ENCODE measurements at regions of chr6 and their contacts with region 1.

Region 1: GRCh38 chr6:83067448-83068413 is at the start of gene DOP1A:
- DNase-seq: peak; percentile 91
- H3K4me3 ChIP-seq: peak within 1 kb of the TSS; percentile 92 to 96 (median 94)
- H3K27ac ChIP-seq: peak within 1 kb of the TSS; percentile 65
- H3K4me1 ChIP-seq: peaks cover 34% of the 10 kb centered on the region
- H3K27me3 ChIP-seq: no peaks in the 10 kb centered on the region
- CTCF ChIP-seq: peak; percentile 91 to 98
- total RNA-seq, gene DOP1A: 24.3 to 74.3 TPM

Region 2: DNA sequence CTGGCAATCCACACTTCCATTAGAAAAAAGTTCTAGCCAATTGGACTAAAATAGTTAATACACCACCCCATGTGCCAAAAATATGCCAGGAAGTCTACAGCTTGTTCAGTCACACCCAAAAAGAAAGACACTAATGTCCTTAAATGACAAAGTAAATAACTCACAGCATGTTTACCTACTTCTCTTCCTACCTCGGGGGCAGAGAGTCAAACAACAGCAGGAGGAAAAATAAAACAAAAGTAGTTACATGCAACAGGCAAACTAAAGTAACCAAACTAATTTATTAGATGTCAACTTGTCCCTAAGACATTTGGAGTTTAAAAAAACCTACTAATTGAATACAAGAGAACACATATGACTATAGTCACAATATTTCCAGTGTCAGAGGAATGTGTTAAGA is 59.1 kb before region 1 on chr6:
- CTCF ChIA-PET with region 1: no interaction called
- dilution Hi-C with region 1: no loop called
- in situ Hi-C with region 1: no loop called
- intact Hi-C with region 1: no loop called
- DNase-seq: no peak
- H3K4me3 ChIP-seq: no peak overlapping the region
- H3K27ac ChIP-seq: no peak overlapping the region
- H3K4me1 ChIP-seq: no peaks in the 10 kb centered on the region
- H3K27me3 ChIP-seq: no peaks in the 10 kb centered on the region
- CTCF ChIP-seq: no peak

Region 3: DNA sequence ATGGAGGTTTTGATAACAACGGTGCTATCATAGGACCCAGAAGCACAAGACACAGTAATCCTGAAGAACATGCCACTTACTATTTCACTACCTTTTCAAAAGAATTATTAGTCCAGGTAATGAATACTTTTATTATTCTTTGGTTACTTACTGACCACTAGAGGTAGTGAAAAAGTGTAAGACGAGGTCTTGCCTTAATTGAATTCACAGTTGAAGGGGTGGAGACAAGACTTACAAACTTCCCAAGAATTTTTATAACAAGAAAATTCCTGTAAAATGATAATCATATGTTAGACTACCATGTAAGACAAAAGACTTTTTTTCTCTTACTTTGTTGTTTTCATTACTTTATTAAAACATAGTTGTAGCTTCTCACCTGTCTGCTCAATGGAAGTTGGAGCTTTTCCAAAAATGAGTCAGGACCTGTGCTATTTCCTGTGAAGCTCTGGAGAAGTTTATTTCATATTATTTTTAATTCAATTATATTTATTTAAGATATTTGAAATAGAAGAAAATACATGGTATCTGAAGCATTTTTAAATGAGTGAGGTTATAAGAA is 52.1 kb after region 1 on chr6:
- CTCF ChIA-PET with region 1: interaction called, 7 read pairs
- dilution Hi-C with region 1: no loop called
- in situ Hi-C with region 1: no loop called
- intact Hi-C with region 1: loop called (anchors 1 kb)
- DNase-seq: peak; percentile 71
- H3K4me3 ChIP-seq: no peak overlapping the region
- H3K27ac ChIP-seq: no peak overlapping the region
- H3K4me1 ChIP-seq: peaks cover 12% of the 10 kb centered on the region
- H3K27me3 ChIP-seq: no peaks in the 10 kb centered on the region
- CTCF ChIP-seq: no peak

Region 4: GRCh38 chr6:83192871-83193746 is 125.4 kb after region 1 on chr6 and contains the starts of genes PGM3 and RWDD2A:
- CTCF ChIA-PET with region 1: interaction called, 3 read pairs
- dilution Hi-C with region 1: no loop called
- in situ Hi-C with region 1: no loop called
- intact Hi-C with region 1: loop called (anchors 5 kb)
- DNase-seq: peak; percentile 77
- H3K4me3 ChIP-seq: peak within 1 kb of the TSS; percentile 77 to 89 (median 86)
- H3K27ac ChIP-seq: peak within 1 kb of the TSS; percentile 56
- H3K4me1 ChIP-seq: peaks cover 13% of the 10 kb centered on the region
- H3K27me3 ChIP-seq: no peaks in the 10 kb centered on the region
- CTCF ChIP-seq: no peak
- total RNA-seq, gene PGM3: 32.2 to 63.6 TPM
- total RNA-seq, gene RWDD2A: 1.3 to 2.6 TPM

Region 5: DNA sequence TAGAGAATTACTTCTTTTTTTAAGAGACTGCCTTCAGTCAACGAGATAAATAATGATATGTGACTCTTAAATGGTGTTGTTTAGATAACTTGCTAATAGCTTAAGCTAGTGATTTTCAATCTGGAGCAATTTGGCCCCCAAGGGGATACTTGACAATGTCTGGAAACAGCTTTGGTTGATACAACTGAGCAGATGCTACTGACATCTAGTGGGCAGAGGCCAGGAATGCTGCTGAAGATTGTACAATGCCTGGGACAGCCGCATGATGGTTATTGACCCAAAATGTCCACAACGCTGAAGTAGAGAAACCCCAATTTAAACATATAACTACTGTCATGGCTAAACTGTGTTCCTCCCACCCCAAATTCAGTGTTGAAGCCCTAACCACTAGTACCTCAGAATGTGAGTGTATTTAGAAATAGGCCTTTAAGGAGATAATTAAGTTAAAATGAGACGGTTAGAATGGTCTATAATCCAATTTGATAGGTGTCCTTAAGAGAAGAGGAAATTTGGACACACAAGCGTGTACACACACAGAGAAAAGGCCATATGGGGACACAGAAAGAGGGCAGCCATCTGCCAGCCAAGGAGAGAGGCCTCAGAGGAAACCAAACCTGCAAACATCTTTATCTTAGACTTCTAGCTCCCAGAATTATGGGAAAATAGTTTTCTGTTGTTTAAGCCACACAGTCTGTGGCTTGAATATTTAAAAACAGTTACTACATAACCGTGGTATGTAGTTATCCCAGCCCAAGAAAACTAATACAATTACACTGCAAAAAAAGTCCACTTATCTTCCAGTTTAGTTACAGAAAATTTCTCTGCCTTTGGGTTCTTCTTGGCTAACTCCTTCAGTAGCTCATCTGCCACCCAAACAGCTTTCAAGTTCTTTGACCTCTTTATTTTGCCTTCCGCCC is 147.7 kb after region 1 on chr6:
- CTCF ChIA-PET with region 1: interaction called, 30 read pairs
- dilution Hi-C with region 1: no loop called
- in situ Hi-C with region 1: no loop called
- intact Hi-C with region 1: loop called (anchors 1 kb)
- DNase-seq: peak; percentile 51
- H3K4me3 ChIP-seq: no peak overlapping the region
- H3K27ac ChIP-seq: no peak overlapping the region
- H3K4me1 ChIP-seq: no peaks in the 10 kb centered on the region
- H3K27me3 ChIP-seq: no peaks in the 10 kb centered on the region
- CTCF ChIP-seq: peak; percentile 80 to 91

Region 6: DNA sequence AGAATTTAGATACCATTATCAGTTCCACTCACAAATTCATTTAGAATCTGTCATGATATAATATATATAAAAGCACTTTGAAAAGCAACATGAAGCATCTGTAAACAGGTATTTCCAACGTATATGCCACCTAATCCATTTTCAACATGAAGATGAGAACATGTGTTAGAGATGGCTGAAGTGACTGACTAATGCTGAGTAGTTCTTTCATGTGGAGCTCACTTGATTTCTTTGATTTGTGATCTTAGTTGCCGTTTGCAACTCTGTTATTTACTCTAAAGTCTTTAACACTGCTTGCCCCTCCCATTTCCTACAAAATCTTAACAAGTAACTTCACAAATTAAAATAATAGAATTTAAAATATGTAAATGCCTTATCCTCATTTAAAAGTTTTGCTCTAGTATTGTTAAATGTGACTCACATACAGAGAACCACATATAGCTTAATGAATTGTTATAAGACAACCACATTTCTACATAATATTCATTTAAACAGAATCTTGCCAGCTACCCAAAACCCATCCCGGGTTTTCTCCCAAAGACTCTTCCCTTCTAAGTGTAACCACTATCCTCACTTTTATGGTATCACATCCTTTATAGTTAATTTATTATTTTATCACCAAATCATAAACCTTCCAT is 284.8 kb after region 1 on chr6:
- CTCF ChIA-PET with region 1: no interaction called
- dilution Hi-C with region 1: no loop called
- in situ Hi-C with region 1: no loop called
- intact Hi-C with region 1: no loop called
- DNase-seq: peak; percentile 1
- H3K4me3 ChIP-seq: no peak overlapping the region
- H3K27ac ChIP-seq: no peak overlapping the region
- H3K4me1 ChIP-seq: no peaks in the 10 kb centered on the region
- H3K27me3 ChIP-seq: no peaks in the 10 kb centered on the region
- CTCF ChIP-seq: no peak

Region 7: GRCh38 chr6:83430611-83431563 is 363.2 kb after region 1 on chr6 and contains the start of gene ME1:
- CTCF ChIA-PET with region 1: interaction called, 3 read pairs
- dilution Hi-C with region 1: no loop called
- in situ Hi-C with region 1: no loop called
- intact Hi-C with region 1: loop called (anchors 2 kb)
- DNase-seq: peak; percentile 79
- H3K4me3 ChIP-seq: peak within 1 kb of the TSS; percentile 40 to 63 (median 61)
- H3K27ac ChIP-seq: peak within 1 kb of the TSS; percentile 69
- H3K4me1 ChIP-seq: peaks cover 7% of the 10 kb centered on the region
- H3K27me3 ChIP-seq: no peaks in the 10 kb centered on the region
- CTCF ChIP-seq: no peak
- total RNA-seq, gene ME1: 28.8 to 36.3 TPM